ENCODE measurements at regions of chr5 and their contacts with region 1.

Region 1: DNA sequence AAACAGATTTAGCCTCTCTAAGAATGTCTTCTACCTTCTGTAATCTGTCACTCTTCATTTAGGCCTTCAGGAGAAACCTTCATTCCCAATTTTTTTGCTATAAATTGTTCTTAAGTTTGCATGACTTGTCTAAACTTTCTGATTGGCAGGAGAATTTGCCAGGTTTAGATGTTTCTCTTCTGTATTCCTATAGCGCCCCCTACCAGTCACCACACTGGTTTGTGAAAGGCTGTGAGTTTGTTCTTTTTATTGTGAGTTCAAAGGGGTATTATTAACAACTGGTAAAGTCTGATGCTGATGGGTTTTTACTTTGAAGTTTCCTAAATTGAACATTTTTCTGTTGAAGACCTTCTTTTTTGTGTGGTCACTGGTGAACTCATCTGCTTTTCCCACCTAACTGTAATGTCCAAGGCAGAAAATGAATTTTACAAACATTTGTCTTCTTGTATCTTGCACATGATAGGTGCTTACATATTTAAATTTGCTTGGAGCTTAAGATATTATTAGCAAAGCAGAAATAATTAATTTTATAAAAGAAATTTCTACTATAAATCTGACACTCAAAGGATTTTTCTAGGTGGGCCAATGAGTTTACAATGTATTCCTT is 18.4 kb upstream of the F2RL2 start:
- DNase-seq: no peak
- H3K4me3 ChIP-seq: no peak overlapping the region
- CTCF ChIP-seq: peak; percentile 60

Region 2: GRCh38 chr5:76608833-76609232 is 32.8 kb before region 1 on chr5:
- CTCF ChIA-PET with region 1: interaction called, 288 read pairs
- POLR2A ChIA-PET with region 1: no interaction called
- DNase-seq: no peak
- H3K4me3 ChIP-seq: no peak overlapping the region
- CTCF ChIP-seq: no peak

Region 3: DNA sequence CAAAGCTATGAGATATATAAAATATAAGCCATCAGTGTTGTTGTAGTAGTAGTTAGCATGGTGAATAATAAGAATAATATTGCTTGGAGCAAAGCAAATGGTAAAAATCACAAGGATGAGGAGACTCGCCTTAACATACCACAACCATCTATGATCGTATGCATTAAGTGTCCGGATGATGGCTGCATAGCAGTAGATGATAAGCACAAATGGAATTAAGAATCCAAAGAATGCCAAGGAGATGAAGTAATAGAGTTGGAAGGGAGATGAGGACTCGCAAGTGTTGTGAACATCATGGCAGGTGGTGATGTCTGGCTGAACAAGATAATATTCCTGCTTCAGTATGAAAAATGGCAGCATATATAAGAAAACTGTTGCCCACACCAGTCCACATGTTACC is 23.9 kb before region 1 on chr5:
- CTCF ChIA-PET with region 1: interaction called, 67 read pairs
- POLR2A ChIA-PET with region 1: no interaction called
- DNase-seq: peak; percentile 92
- H3K4me3 ChIP-seq: no peak overlapping the region
- CTCF ChIP-seq: no peak

Region 4: DNA sequence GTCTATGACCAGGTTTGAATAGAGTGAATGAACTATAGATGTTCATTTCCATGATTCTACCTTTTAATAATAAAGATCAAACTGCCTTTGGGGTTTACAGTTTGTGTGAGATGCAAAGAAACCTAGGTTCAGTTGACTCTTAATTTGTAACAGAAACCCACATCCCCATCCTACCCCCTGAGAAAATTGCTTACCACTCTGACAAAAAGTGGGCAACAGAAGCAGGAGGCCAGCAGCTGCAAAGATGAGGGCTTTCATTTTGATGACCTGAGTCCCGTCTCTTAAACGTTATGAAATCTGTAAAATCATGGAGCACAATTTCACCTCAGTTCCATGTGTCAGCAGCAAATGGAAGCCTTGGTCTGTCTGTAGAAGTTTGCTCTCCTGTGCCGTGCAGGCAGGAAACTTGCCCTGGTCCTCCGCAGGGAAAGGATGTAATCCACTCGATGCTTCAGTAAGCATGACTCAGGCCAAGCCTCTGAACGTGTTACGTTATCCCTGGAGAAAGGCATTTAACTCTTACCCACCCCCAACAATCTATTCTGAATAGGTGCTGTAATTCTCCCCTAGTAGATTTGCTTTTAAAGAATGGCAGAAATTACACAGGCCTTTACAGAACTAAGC is 18.5 kb before region 1 on chr5 and contains the start of gene F2RL2:
- CTCF ChIA-PET with region 1: interaction called, 15 read pairs
- POLR2A ChIA-PET with region 1: no interaction called
- DNase-seq: no peak
- H3K4me3 ChIP-seq: peak within 1 kb of the TSS; percentile 60
- CTCF ChIP-seq: no peak

Region 5: GRCh38 chr5:76657683-76658311 is 16.2 kb after region 1 on chr5:
- CTCF ChIA-PET with region 1: interaction called, 67 read pairs
- POLR2A ChIA-PET with region 1: no interaction called
- DNase-seq: no peak
- H3K4me3 ChIP-seq: no peak overlapping the region
- CTCF ChIP-seq: no peak

Region 6: DNA sequence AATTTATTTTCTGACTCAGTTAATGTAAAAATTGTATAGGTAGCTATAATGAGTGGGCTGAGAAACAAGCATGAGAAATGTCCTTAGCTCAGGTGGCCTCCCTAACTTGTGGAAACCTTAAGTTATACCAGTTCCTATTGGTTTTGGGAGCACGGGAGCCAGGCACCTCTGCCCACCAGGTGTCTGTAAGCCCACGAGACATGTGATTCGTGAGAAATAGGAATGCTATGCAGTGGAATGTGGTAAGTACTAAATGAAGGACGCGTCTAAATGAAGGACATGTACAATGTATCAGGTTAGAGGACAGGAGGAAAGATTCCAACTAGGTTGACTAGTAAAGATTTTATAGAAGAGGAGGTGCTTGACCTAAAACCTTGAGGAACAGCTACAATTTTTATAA is 27.6 kb after region 1 on chr5:
- CTCF ChIA-PET with region 1: no interaction called
- POLR2A ChIA-PET with region 1: no interaction called
- DNase-seq: no peak
- H3K4me3 ChIP-seq: no peak overlapping the region
- CTCF ChIP-seq: no peak